Astrocyte of the cerebellum (primary cell): ENCODE measurements at regions of chr3 and their contacts with region 1.

Region 1: GRCh38 chr3:146125951-146126350 is 35.0 kb downstream of the PLOD2 start:
- DNase-seq: peak; percentile 95
- H3K4me3 ChIP-seq: no peak overlapping the region
- CTCF ChIP-seq: no peak

Region 2: GRCh38 chr3:146065573-146066006 is 60.4 kb before region 1 on chr3:
- in situ Hi-C with region 1: loop called (anchors 5 kb)
- DNase-seq: peak; percentile 81
- H3K4me3 ChIP-seq: no peak overlapping the region
- CTCF ChIP-seq: peak; percentile 36